Breast epithelium (tissue), 4 donors: ENCODE measurements at regions of chr2 and their contacts with region 1.

Region 1: GRCh38 chr2:155866477-155866876 is 466.0 kb downstream of the NR4A2 start:
- DNase-seq: no peak
- H3K4me3 ChIP-seq: no peak overlapping the region
- H3K27ac ChIP-seq: no peak overlapping the region
- H3K4me1 ChIP-seq: no peaks in the 10 kb centered on the region
- H3K27me3 ChIP-seq: no peaks in the 10 kb centered on the region
- CTCF ChIP-seq: no peak
- POLR2A ChIP-seq: no peak

Region 2: DNA sequence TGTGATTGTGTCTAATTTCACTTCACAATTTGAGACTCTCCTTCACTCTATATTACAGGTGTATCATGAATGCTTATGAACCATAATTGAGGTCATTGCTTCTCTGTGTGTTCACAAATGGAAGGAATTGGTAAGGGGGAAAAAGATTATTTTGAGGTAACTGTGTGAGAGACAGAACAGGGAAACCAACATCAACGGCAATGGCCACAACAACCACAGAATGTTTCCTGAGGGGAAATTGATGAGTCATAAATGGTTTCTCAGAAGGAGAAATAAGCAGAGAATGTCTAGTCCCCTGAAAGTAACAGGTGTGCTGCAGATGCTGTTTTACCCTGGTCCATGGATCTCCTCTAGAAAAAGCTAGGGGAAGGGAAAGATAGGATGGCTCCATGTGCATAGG is 1029.8 kb after region 1 on chr2:
- intact Hi-C with region 1: loop called (anchors 5 kb)
- DNase-seq: no peak
- H3K4me3 ChIP-seq: no peak overlapping the region
- H3K27ac ChIP-seq: no peak overlapping the region
- H3K4me1 ChIP-seq: no peaks in the 10 kb centered on the region
- H3K27me3 ChIP-seq: no peaks in the 10 kb centered on the region
- CTCF ChIP-seq: no peak
- POLR2A ChIP-seq: no peak